Transverse colon (tissue), 4 donors: ENCODE measurements at regions of chr3 and their contacts with region 1.

Region 1: DNA sequence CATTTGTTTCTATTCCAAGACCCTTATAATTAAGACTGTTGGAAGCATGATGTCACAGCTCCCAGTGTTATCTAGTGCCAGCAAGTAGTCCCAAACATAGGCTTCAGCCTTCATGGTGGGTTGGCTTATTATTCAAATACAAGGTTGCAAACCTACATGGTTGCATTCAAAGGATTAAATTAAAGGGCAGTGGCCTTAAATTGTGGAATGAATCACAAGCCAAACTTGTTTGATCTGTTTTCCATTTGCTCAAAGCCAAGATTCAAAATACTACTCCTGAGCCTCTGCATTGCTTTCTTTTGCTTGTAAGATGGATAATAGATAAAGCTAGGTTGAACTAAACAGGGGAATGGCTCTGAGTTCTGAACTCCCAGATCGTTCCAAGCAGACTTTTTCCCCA is 52.4 kb upstream of the GNB4 start:
- DNase-seq: no peak
- H3K4me3 ChIP-seq: no peak overlapping the region
- H3K27ac ChIP-seq: no peak overlapping the region
- H3K4me1 ChIP-seq: no peaks in the 10 kb centered on the region
- H3K27me3 ChIP-seq: no peaks in the 10 kb centered on the region
- CTCF ChIP-seq: no peak
- EP300 ChIP-seq: no peak
- POLR2A ChIP-seq: no peak

Region 2: GRCh38 chr3:179476215-179476614 is 27.4 kb before region 1 on chr3:
- in situ Hi-C with region 1: no loop called
- intact Hi-C with region 1: no loop called
- DNase-seq: no peak
- H3K4me3 ChIP-seq: no peak overlapping the region
- H3K27ac ChIP-seq: no peak overlapping the region
- H3K4me1 ChIP-seq: no peaks in the 10 kb centered on the region
- H3K27me3 ChIP-seq: no peaks in the 10 kb centered on the region
- CTCF ChIP-seq: no peak
- EP300 ChIP-seq: no peak
- POLR2A ChIP-seq: no peak

Region 3: DNA sequence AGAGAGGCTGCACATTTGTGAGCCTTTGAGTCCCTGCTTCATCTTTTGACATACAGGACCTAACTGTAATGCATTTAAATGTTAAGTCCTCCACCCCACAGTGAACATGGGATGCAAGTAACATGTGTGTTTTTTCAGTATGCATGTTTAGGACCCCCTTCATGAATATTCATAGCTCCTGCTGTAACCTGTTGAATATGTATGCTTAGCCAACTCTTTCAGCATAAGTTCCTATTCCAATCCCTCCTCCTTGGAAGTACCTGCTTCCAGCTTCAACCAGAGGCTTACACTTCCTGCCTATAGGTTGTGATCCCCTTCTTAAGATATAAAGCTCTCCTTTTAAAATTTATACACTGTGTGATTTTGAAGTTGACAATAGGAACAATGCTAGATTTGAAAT is 15.4 kb before region 1 on chr3:
- in situ Hi-C with region 1: no loop called
- intact Hi-C with region 1: loop called (anchors 2 kb)
- DNase-seq: no peak
- H3K4me3 ChIP-seq: no peak overlapping the region
- H3K27ac ChIP-seq: no peak overlapping the region
- H3K4me1 ChIP-seq: no peaks in the 10 kb centered on the region
- H3K27me3 ChIP-seq: no peaks in the 10 kb centered on the region
- CTCF ChIP-seq: no peak
- EP300 ChIP-seq: no peak
- POLR2A ChIP-seq: no peak